Activated CD8-positive, alpha-beta T cell treated with anti-CD3 and anti-CD28 coated beads, Interleukin-2, amount 10 ng/mL, durations not matched to agents 7 days and 5 days (primary cell): ENCODE measurements at regions of chr3 and their contacts with region 1.

Region 1: DNA sequence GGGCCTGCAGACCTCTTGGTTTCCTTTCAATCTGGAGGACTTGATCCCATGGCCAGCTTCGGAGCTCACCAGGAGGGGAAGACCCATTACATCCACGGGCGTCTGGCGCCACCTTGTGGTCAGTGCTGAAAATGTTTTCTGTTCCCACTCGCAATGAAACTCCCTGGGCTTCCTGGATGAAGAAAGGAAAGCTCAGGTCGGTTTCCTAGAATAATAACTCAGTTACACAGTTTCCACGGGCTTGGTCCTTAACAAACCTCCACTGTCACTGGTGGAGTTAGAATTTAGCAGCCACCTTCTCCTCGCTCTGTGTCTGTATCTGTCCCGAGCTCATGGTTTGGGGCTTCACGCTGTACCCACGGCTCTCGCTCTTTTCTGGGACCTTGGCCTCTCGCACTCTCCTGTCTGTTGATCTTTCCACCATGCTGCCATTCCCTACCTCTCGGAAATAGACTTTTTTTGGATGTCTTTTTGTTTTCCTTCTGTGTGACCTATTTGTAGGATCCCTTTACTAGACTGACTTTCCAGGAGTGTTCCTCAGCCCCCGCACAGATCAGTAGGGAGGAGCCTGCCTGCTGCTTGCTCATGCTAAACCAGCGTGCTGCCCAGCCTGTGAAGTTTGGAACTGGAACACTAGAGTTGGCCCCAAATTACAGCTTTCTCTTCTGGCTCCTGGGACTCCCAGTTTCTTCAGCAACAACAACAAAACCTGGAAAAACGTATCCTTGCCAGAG is 56.3 kb downstream of the IL20RB start:
- DNase-seq: peak; percentile 85
- ATAC-seq: peak; percentile 94
- H3K4me3 Mint-ChIP-seq: peak overlapping the region; percentile 65
- H3K27ac Mint-ChIP-seq: peak overlapping the region; percentile 35
- H3K4me1 Mint-ChIP-seq: peaks cover 14% of the 10 kb centered on the region
- H3K27me3 Mint-ChIP-seq: peaks cover 2% of the 10 kb centered on the region

Region 2: GRCh38 chr3:136305878-136306277 is 708.2 kb before region 1 on chr3:
- CTCF ChIA-PET with region 1: interaction called, 27 read pairs
- POLR2A ChIA-PET with region 1: no interaction called
- DNase-seq: no peak
- ATAC-seq: no peak
- H3K4me3 Mint-ChIP-seq: no peak overlapping the region
- H3K27ac Mint-ChIP-seq: peak overlapping the region; percentile 57
- H3K4me1 Mint-ChIP-seq: peaks cover 2% of the 10 kb centered on the region
- H3K27me3 Mint-ChIP-seq: no peaks in the 10 kb centered on the region

Region 3: GRCh38 chr3:136545664-136546268 is 468.4 kb before region 1 on chr3:
- CTCF ChIA-PET with region 1: interaction called, 10 read pairs
- POLR2A ChIA-PET with region 1: no interaction called
- DNase-seq: no peak
- ATAC-seq: no peak
- H3K4me3 Mint-ChIP-seq: no peak overlapping the region
- H3K27ac Mint-ChIP-seq: no peak overlapping the region
- H3K4me1 Mint-ChIP-seq: no peaks in the 10 kb centered on the region
- H3K27me3 Mint-ChIP-seq: no peaks in the 10 kb centered on the region

Region 4: GRCh38 chr3:136861890-136862616 is 152.1 kb before region 1 on chr3 and contains the start of gene NCK1:
- CTCF ChIA-PET with region 1: interaction called, 17 read pairs
- POLR2A ChIA-PET with region 1: interaction called, 5 read pairs
- DNase-seq: peak; percentile 99
- ATAC-seq: peak; percentile 99
- H3K4me3 Mint-ChIP-seq: peak within 1 kb of the TSS; percentile 92
- H3K27ac Mint-ChIP-seq: peak within 1 kb of the TSS; percentile 96
- H3K4me1 Mint-ChIP-seq: peaks cover 49% of the 10 kb centered on the region
- H3K27me3 Mint-ChIP-seq: no peaks in the 10 kb centered on the region
- total RNA-seq, gene NCK1: 36.3 to 39.1 TPM

Region 5: GRCh38 chr3:136957751-136958288 is 56.3 kb before region 1 on chr3 and contains the start of gene IL20RB:
- CTCF ChIA-PET with region 1: no interaction called
- POLR2A ChIA-PET with region 1: no interaction called
- DNase-seq: no peak
- ATAC-seq: no peak
- H3K4me3 Mint-ChIP-seq: no peak within 1 kb of the TSS
- H3K27ac Mint-ChIP-seq: no peak within 1 kb of the TSS
- H3K4me1 Mint-ChIP-seq: peaks cover 4% of the 10 kb centered on the region
- H3K27me3 Mint-ChIP-seq: no peaks in the 10 kb centered on the region
- total RNA-seq, gene IL20RB: 1.6 to 2.1 TPM

Region 6: DNA sequence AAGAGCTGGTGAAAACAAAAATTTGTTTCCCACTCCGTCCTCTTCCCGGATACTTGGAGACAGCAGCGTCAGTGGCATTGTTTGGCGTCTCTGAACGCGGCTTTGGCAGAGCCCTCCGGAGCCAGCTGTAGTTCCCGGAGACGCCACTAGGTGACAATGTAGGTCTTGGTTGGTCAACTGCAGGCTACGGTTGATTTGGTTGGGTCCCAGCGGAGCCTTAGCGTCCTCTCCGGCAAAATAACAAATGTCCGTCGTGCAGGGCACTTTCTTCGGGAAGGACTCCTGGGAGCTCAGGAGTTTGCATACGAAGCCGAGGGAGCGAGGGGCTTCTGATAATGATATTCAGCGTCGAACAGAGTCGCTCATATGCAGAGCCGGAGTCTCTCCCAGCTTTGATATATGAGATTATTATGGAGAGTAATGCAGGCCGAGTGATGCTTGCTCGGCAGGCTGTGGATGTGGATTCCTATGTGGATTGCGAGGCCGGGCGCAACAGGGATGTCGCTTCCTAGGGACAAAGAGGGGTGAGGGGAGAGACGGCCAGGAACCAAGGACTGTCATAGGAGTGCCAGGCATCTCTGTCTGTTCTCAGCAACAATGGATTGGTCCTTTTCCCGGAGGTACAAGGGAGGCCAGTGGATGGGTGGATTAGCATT is 18.5 kb after region 1 on chr3:
- CTCF ChIA-PET with region 1: interaction called, 14 read pairs
- POLR2A ChIA-PET with region 1: no interaction called
- DNase-seq: peak; percentile 86
- ATAC-seq: peak; percentile 85
- H3K4me3 Mint-ChIP-seq: peak overlapping the region; percentile 60
- H3K27ac Mint-ChIP-seq: no peak overlapping the region
- H3K4me1 Mint-ChIP-seq: peaks cover 10% of the 10 kb centered on the region
- H3K27me3 Mint-ChIP-seq: peaks cover 28% of the 10 kb centered on the region

Region 7: GRCh38 chr3:137121704-137122314 is 107.7 kb after region 1 on chr3:
- CTCF ChIA-PET with region 1: no interaction called
- POLR2A ChIA-PET with region 1: no interaction called
- DNase-seq: peak; percentile 34
- ATAC-seq: no peak
- H3K4me3 Mint-ChIP-seq: no peak overlapping the region
- H3K27ac Mint-ChIP-seq: no peak overlapping the region
- H3K4me1 Mint-ChIP-seq: no peaks in the 10 kb centered on the region
- H3K27me3 Mint-ChIP-seq: peaks cover 14% of the 10 kb centered on the region